ENCODE measurements at regions of chr2 and their contacts with region 1.

Region 1: GRCh38 chr2:68751397-68752339 is 17.1 kb downstream of the ARHGAP25 start:
- DNase-seq: peak; percentile 84 to 90 (median 85)
- H3K4me3 ChIP-seq: peak overlapping the region in 1 of 2 donors; percentile 5
- H3K4me3 Mint-ChIP-seq: peak overlapping the region in 7 of 8 donors; percentile 29 to 86 (median 62)
- H3K27ac ChIP-seq: peak overlapping the region; percentile 56
- H3K27ac Mint-ChIP-seq: peak overlapping the region; percentile 83 to 96 (median 94)
- H3K4me1 ChIP-seq: peaks cover 97% of the 10 kb centered on the region
- H3K4me1 Mint-ChIP-seq: peaks cover 73 to 96% (median 86%) of the 10 kb centered on the region in 4 donors
- H3K27me3 ChIP-seq: no peaks in the 10 kb centered on the region
- H3K27me3 Mint-ChIP-seq: no peaks in the 10 kb centered on the region

Region 2: DNA sequence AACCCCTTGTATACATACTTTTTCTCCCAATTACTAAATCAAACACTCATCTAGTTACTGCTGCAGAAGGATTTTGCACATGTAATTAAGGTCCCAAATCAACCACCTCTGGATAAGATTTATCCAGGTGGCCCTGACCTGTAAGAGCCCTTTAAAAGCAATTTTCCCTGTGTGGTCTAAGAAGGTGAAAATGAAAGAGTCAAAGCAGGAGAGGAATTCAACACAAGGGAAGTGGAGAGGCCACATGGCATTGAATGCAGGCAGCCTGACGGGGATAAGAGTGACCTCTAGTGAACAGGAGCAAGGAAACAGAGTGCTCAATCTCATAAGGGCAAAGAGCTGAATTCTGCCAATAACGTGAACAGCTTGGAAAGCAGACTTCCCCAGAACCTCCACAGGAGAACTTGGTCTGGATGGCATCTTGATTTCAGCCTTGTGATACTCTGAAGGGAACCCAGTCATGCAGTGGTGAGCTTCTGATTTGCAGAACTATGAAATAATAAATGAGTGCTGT is 526.5 kb before region 1 on chr2:
- CTCF ChIA-PET with region 1: no interaction called
- POLR2A ChIA-PET with region 1: no interaction called
- intact Hi-C with region 1: no loop called
- DNase-seq: peak in 4 of 5 donors; percentile 11 to 26 (median 18)
- H3K4me3 ChIP-seq: no peak overlapping the region
- H3K4me3 Mint-ChIP-seq: peak overlapping the region in 6 of 8 donors; percentile 0 to 82 (median 38)
- H3K27ac ChIP-seq: no peak overlapping the region
- H3K27ac Mint-ChIP-seq: peak overlapping the region; percentile 3 to 91 (median 19)
- H3K4me1 ChIP-seq: peaks cover 94% of the 10 kb centered on the region
- H3K4me1 Mint-ChIP-seq: peaks cover 71 to 99% (median 83%) of the 10 kb centered on the region in 4 donors
- H3K27me3 ChIP-seq: no peaks in the 10 kb centered on the region
- H3K27me3 Mint-ChIP-seq: no peaks in the 10 kb centered on the region

Region 3: GRCh38 chr2:68605939-68606338 is 145.7 kb before region 1 on chr2:
- CTCF ChIA-PET with region 1: no interaction called
- POLR2A ChIA-PET with region 1: no interaction called
- intact Hi-C with region 1: no loop called
- DNase-seq: no peak
- H3K4me3 ChIP-seq: no peak overlapping the region
- H3K4me3 Mint-ChIP-seq: no peak overlapping the region
- H3K27ac ChIP-seq: no peak overlapping the region
- H3K27ac Mint-ChIP-seq: no peak overlapping the region
- H3K4me1 ChIP-seq: no peaks in the 10 kb centered on the region
- H3K4me1 Mint-ChIP-seq: no peaks in the 10 kb centered on the region
- H3K27me3 ChIP-seq: no peaks in the 10 kb centered on the region
- H3K27me3 Mint-ChIP-seq: peaks cover 1 to 3% of the 10 kb centered on the region in 2 donors

Region 4: GRCh38 chr2:68689553-68690537 is 61.8 kb before region 1 on chr2:
- CTCF ChIA-PET with region 1: no interaction called
- POLR2A ChIA-PET with region 1: no interaction called
- intact Hi-C with region 1: no loop called
- DNase-seq: no peak
- H3K4me3 ChIP-seq: no peak overlapping the region
- H3K4me3 Mint-ChIP-seq: no peak overlapping the region
- H3K27ac ChIP-seq: no peak overlapping the region
- H3K27ac Mint-ChIP-seq: no peak overlapping the region
- H3K4me1 ChIP-seq: no peaks in the 10 kb centered on the region
- H3K4me1 Mint-ChIP-seq: peaks cover 5 to 11% (median 9%) of the 10 kb centered on the region in 4 donors
- H3K27me3 ChIP-seq: no peaks in the 10 kb centered on the region
- H3K27me3 Mint-ChIP-seq: peaks cover 0 to 2% of the 10 kb centered on the region in 2 donors

Region 5: DNA sequence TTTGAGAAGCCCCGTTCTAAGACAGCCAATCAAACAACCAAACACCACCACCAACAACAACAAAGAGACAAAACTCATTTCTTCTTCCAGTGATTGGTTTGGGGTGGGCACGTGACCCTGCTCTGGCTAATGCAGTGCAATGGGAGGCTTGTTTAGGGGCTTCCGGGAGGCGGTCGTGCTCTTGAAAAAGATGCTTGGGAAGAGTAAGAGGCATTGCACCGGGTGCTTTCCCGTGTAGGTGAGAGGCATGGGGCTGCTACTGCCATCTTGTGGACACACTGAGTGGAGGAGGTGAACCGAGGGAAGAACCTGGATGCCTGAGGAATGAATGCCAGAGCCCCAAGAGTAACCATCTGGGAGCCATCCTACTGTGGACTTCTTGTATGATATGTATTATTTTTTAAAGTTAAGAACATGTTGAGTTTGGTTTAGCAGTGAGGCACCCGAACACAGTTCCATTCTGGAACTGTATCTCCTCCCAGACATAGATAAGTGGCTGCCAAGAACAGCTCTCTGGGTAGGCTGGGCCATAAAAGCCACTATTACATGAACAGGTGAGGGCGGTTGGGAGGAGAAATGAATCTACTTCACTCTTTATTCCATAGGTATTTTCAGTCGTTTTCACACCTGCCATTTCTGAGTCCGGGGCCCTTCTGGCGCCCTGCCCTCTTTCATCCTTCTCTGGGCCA is 36.2 kb before region 1 on chr2:
- CTCF ChIA-PET with region 1: interaction called, 745 read pairs
- POLR2A ChIA-PET with region 1: interaction called, 659 read pairs
- intact Hi-C with region 1: no loop called
- DNase-seq: peak; percentile 39 to 55 (median 45)
- H3K4me3 ChIP-seq: peak overlapping the region in 1 of 2 donors; percentile 37
- H3K4me3 Mint-ChIP-seq: peak overlapping the region in 7 of 8 donors; percentile 44 to 76 (median 56)
- H3K27ac ChIP-seq: peak overlapping the region; percentile 29
- H3K27ac Mint-ChIP-seq: peak overlapping the region; percentile 54 to 93 (median 86)
- H3K4me1 ChIP-seq: peaks cover 63% of the 10 kb centered on the region
- H3K4me1 Mint-ChIP-seq: peaks cover 63 to 88% (median 70%) of the 10 kb centered on the region in 4 donors
- H3K27me3 ChIP-seq: no peaks in the 10 kb centered on the region
- H3K27me3 Mint-ChIP-seq: no peaks in the 10 kb centered on the region

Region 6: DNA sequence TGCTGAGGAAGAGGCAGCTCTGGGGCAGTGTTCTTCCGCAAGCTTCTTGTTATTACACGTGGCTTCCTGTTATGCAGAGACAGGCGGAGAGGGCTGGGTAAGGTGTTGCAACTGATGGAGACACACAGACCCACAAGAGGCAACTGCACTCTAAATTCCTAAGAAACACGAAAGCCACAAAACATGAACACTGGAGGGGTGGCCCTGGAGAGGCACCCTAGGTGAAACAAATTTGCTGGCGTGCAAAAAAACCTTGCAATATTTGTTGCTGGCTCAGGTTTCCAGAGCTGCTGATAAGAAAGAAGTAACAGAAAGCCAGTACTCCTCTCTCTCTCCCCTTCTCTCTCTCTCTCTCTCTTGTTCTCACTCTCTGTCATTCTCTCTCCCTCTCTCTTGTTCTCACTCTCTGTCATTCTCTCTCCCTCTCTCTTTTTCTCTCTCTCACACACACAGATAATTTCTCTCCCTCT is 14.7 kb after region 1 on chr2:
- CTCF ChIA-PET with region 1: interaction called, 526 read pairs
- POLR2A ChIA-PET with region 1: interaction called, 728 read pairs
- intact Hi-C with region 1: loop called (anchors 1 kb)
- DNase-seq: peak; percentile 79 to 89 (median 81)
- H3K4me3 ChIP-seq: peak overlapping the region; percentile 12 to 47
- H3K4me3 Mint-ChIP-seq: peak overlapping the region; percentile 78 to 95 (median 86)
- H3K27ac ChIP-seq: peak overlapping the region; percentile 90
- H3K27ac Mint-ChIP-seq: peak overlapping the region; percentile 95 to 99 (median 98)
- H3K4me1 ChIP-seq: peaks cover 99% of the 10 kb centered on the region
- H3K4me1 Mint-ChIP-seq: peaks cover 85 to 99% (median 92%) of the 10 kb centered on the region in 4 donors
- H3K27me3 ChIP-seq: no peaks in the 10 kb centered on the region
- H3K27me3 Mint-ChIP-seq: peaks cover 0 to 2% of the 10 kb centered on the region in 2 donors

Region 7: GRCh38 chr2:68789603-68790002 is 37.9 kb after region 1 on chr2:
- CTCF ChIA-PET with region 1: interaction called, 52 read pairs
- POLR2A ChIA-PET with region 1: interaction called, 23 read pairs
- intact Hi-C with region 1: no loop called
- DNase-seq: no peak
- H3K4me3 ChIP-seq: no peak overlapping the region
- H3K4me3 Mint-ChIP-seq: peak overlapping the region in 2 of 8 donors; percentile 4 to 12
- H3K27ac ChIP-seq: peak overlapping the region; percentile 15
- H3K27ac Mint-ChIP-seq: peak overlapping the region in 6 of 7 donors; percentile 71 to 90 (median 82)
- H3K4me1 ChIP-seq: peaks cover 78% of the 10 kb centered on the region
- H3K4me1 Mint-ChIP-seq: peaks cover 41 to 53% (median 48%) of the 10 kb centered on the region in 4 donors
- H3K27me3 ChIP-seq: no peaks in the 10 kb centered on the region
- H3K27me3 Mint-ChIP-seq: no peaks in the 10 kb centered on the region

Region 8: GRCh38 chr2:68811364-68811763 is 59.7 kb after region 1 on chr2:
- CTCF ChIA-PET with region 1: interaction called, 18 read pairs
- POLR2A ChIA-PET with region 1: interaction called, 4 read pairs
- intact Hi-C with region 1: no loop called
- DNase-seq: no peak
- H3K4me3 ChIP-seq: no peak overlapping the region
- H3K4me3 Mint-ChIP-seq: no peak overlapping the region
- H3K27ac ChIP-seq: no peak overlapping the region
- H3K27ac Mint-ChIP-seq: peak overlapping the region in 6 of 7 donors; percentile 51 to 89 (median 72)
- H3K4me1 ChIP-seq: peaks cover 43% of the 10 kb centered on the region
- H3K4me1 Mint-ChIP-seq: peaks cover 34 to 48% (median 37%) of the 10 kb centered on the region in 4 donors
- H3K27me3 ChIP-seq: no peaks in the 10 kb centered on the region
- H3K27me3 Mint-ChIP-seq: no peaks in the 10 kb centered on the region

Region 9: DNA sequence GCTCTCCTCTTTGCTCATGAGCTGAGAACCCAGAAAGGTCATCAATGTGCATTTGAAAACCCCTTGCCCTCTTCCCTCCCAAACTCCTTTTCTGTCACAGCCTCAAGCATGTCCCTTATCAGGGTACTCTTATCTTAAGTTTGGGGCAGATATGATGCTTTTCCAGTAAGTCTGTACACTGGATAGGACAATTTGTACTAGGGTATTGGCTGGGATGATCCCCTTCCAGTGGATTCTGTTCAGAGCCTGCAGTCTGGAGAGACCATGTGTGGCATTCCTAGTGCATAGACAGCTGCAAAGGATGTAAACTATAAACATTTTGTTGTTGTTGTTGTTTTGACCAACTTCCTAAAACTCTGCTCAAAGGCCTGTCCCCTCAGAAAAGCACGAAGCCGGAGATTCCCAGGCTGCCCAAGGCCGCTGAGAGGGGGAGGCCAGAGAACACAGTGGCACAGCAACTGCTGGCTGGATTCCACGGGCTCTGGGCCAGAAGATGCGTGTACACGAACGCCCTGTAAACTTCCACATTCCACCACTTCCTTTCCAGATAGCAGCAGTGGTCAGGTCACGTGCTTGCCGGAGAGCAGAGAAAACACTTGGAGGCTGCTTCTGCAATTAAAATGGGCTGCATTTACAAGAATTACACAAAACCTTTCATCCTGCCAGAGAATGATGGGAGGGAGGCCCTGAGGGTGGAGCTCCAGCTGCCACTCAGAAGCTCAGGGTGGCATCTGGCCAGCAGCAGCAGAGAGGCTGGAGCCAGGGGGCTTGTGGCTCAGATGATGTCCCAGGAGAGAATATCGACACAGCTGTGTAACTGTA is 77.4 kb after region 1 on chr2:
- CTCF ChIA-PET with region 1: interaction called, 199 read pairs
- POLR2A ChIA-PET with region 1: interaction called, 26 read pairs
- intact Hi-C with region 1: loop called (anchors 2 kb)
- DNase-seq: peak; percentile 80 to 90 (median 83)
- H3K4me3 ChIP-seq: peak overlapping the region in 1 of 2 donors; percentile 32
- H3K4me3 Mint-ChIP-seq: peak overlapping the region; percentile 17 to 91 (median 80)
- H3K27ac ChIP-seq: peak overlapping the region; percentile 65
- H3K27ac Mint-ChIP-seq: peak overlapping the region; percentile 90 to 94 (median 92)
- H3K4me1 ChIP-seq: peaks cover 59% of the 10 kb centered on the region
- H3K4me1 Mint-ChIP-seq: peaks cover 50 to 73% (median 62%) of the 10 kb centered on the region in 4 donors
- H3K27me3 ChIP-seq: no peaks in the 10 kb centered on the region
- H3K27me3 Mint-ChIP-seq: no peaks in the 10 kb centered on the region

Region 10: GRCh38 chr2:68925295-68925896 is 173.7 kb after region 1 on chr2:
- CTCF ChIA-PET with region 1: interaction called, 91 read pairs
- POLR2A ChIA-PET with region 1: interaction called, 12 read pairs
- intact Hi-C with region 1: loop called (anchors 1 kb)
- DNase-seq: peak; percentile 57 to 73 (median 66)
- H3K4me3 ChIP-seq: no peak overlapping the region
- H3K4me3 Mint-ChIP-seq: peak overlapping the region in 1 of 8 donors; percentile 17
- H3K27ac ChIP-seq: no peak overlapping the region
- H3K27ac Mint-ChIP-seq: peak overlapping the region in 3 of 7 donors; percentile 17 to 43 (median 24)
- H3K4me1 ChIP-seq: peaks cover 4% of the 10 kb centered on the region
- H3K4me1 Mint-ChIP-seq: peaks cover 0 to 4% (median 2%) of the 10 kb centered on the region in 4 donors
- H3K27me3 ChIP-seq: no peaks in the 10 kb centered on the region
- H3K27me3 Mint-ChIP-seq: peaks cover 5 to 6% of the 10 kb centered on the region in 2 donors